Left colon (tissue), 2 donors: ENCODE measurements at regions of chr21 and their contacts with region 1.

Region 1: DNA sequence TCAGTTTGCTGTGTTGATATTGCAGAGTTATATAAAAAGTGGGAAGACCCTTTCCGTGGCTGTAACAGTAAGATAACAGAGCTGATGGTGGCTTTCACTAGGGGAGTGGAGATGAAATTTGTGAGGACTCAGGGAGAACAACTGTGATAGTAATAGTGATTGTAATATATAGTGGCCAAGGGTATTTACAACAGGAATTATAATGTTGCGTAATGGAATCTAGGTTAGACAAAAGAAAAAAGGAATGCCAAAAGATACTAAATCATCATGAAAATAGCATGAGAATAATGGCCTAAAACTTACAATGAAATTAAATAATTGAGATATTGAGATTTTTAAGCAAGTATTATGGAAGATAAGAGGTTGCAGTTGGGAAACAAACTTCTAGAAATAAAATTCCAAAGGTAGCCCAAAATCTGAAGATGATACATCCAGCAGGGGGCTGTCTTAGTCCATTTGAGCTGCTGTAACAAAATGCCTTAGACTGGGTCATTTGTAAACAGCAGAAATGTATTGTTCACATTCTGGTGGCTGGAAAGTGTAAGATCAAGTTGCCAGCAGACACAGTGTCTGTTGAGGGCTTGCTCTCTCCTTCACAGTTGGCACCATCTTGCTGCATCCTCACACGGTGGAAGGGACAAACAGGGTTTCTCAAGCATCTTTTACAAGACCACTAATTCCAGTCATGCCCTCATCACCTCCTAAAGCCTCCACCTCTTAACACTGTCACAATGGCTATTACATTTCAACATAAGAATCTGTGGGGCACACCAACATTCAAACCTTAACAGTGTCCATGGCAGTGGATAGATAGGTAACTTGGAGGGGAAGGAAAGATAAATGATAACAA is 711.2 kb downstream of the MRPL39 start:
- DNase-seq: peak in 1 of 2 donors; percentile 5
- ATAC-seq: peak; percentile 47

Region 2: GRCh38 chr21:24988941-24989340 is 92.8 kb after region 1 on chr21:
- intact Hi-C with region 1: no loop called
- DNase-seq: no peak
- ATAC-seq: no peak

Region 3: GRCh38 chr21:25039461-25040380 is 143.6 kb after region 1 on chr21:
- intact Hi-C with region 1: loop called in 1 of 2 experiments (anchors 10 kb)
- DNase-seq: no peak
- ATAC-seq: peak; percentile 75